IMR-90 (cell line): ENCODE measurements at regions of chr6 and their contacts with region 1.

Region 1: DNA sequence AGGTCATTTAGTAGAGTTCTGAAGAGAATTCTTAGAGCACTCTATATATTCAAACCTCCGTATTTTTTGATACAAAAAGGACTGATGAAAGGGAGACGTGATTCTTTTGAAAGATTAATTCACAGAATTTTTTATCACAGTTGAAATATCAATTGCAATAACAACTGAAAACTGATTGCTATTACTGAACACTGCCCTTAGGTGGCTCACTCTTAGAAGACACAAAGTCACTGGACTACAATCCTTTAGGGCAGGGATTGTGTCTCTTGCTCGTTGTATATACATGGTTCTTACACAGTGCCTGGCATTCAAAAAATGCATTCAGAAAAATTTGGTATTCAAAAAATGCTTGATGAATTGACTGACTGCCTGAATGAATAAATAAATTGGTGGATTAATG is 17.1 kb upstream of the CALHM6 start:
- DNase-seq: peak; percentile 51
- ATAC-seq: peak; percentile 38
- H3K4me3 ChIP-seq: no peak overlapping the region
- H3K27ac ChIP-seq: no peak overlapping the region
- H3K4me1 ChIP-seq: peaks cover 13% of the 10 kb centered on the region
- H3K27me3 ChIP-seq: no peaks in the 10 kb centered on the region
- CTCF ChIP-seq: peak; percentile 55
- POLR2A ChIP-seq: no peak
- RAD21 ChIP-seq: peak; percentile 39

Region 2: GRCh38 chr6:116253505-116254296 is 190.4 kb before region 1 on chr6 and contains the start of gene TSPYL4:
- CTCF ChIA-PET with region 1: no interaction called
- POLR2A ChIA-PET with region 1: no interaction called
- dilution Hi-C with region 1: no loop called
- in situ Hi-C with region 1: no loop called
- intact Hi-C with region 1: loop called (anchors 1 kb)
- DNase-seq: peak; percentile 97
- ATAC-seq: peak; percentile 91
- H3K4me3 ChIP-seq: peak within 1 kb of the TSS; percentile 90
- H3K27ac ChIP-seq: peak within 1 kb of the TSS; percentile 86
- H3K4me1 ChIP-seq: peaks cover 22% of the 10 kb centered on the region
- H3K27me3 ChIP-seq: no peaks in the 10 kb centered on the region
- CTCF ChIP-seq: no peak
- POLR2A ChIP-seq: peak; percentile 88
- RAD21 ChIP-seq: no peak
- total RNA-seq, gene TSPYL4: 22.0 and 23.1 TPM in 2 replicates

Region 3: DNA sequence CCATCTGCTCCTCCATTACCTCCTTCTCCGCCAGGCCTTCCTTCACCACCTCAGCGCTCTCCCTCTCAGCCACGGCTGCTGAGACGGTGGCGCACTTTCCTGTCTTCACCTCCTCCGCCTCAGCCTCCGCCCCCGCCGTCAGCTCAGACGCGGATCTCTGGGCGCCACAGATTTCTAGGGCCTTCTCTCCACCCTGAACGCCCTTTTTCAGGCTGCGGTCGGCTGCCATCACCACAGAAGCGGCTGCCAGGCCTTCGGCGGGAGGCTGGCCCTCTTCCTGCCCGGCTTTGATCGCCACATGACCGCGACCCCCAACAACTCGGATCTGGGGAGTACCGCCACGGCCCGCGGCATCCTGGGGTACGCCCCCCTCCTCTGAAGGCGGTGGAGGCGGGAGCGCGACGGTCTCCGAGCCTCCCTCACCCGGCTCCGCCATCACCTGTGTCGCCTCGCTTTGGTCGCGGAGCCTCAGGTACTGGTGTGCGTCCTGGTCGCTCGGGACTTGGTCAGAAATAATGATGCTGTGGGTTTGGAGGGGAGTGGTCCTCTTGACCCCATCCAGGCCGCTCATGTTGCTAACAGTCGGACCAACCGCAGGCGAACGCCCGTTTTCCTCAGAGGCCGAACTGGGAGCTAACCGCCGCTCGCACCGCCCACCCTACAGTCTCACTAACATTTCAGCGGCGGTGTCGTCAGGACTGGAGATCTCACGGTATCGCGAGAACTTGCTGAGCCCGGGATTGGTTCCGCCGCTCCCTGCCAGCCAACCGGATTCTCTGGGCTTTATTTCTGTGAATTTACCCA is 164.6 kb before region 1 on chr6 and contains the start of gene TSPYL1:
- CTCF ChIA-PET with region 1: no interaction called
- POLR2A ChIA-PET with region 1: no interaction called
- dilution Hi-C with region 1: no loop called
- in situ Hi-C with region 1: loop called (anchors 25 kb)
- intact Hi-C with region 1: no loop called
- DNase-seq: peak; percentile 97
- ATAC-seq: peak; percentile 96
- H3K4me3 ChIP-seq: peak within 1 kb of the TSS; percentile 87
- H3K27ac ChIP-seq: peak within 1 kb of the TSS; percentile 93
- H3K4me1 ChIP-seq: peaks cover 6% of the 10 kb centered on the region
- H3K27me3 ChIP-seq: no peaks in the 10 kb centered on the region
- CTCF ChIP-seq: 0 out of 2 replicates have a peak, but pooled peaks have one; percentile 13
- POLR2A ChIP-seq: peak; percentile 94
- RAD21 ChIP-seq: no peak
- total RNA-seq, gene TSPYL1: 111 and 121 TPM in 2 replicates

Region 4: DNA sequence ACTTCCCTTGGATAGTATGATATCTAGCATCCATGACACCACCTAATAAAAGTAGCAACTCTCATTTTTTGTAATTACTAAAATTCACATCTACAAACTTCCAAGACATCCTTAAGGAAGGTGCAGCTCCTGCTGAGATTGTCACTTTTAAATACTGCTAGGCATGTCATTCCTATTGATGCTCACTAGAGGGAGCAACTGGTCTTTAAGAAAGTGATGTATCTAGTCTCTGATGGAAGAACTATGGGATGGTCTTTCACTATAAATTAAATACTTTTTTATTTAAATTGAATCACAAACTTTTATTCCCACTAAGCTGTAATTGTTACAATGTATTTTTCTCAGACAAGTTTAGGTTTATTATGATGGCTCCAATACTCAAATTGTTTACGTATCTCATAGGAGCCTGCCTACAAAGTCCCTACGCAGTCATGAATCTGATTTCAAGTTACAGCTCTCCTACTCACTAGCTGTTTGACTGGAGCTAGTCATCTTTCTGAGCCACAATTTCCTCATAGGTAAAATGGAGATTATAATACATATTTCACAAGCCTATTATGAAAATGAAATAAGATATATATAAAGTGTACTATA is 156.3 kb before region 1 on chr6:
- CTCF ChIA-PET with region 1: interaction called, 12 read pairs
- POLR2A ChIA-PET with region 1: no interaction called
- dilution Hi-C with region 1: no loop called
- in situ Hi-C with region 1: loop called (anchors 25 kb)
- intact Hi-C with region 1: loop called (anchors 5 kb)
- DNase-seq: peak; percentile 74
- ATAC-seq: peak; percentile 87
- H3K4me3 ChIP-seq: no peak overlapping the region
- H3K27ac ChIP-seq: no peak overlapping the region
- H3K4me1 ChIP-seq: no peaks in the 10 kb centered on the region; the same call in 1 of the 2 replicates
- H3K27me3 ChIP-seq: no peaks in the 10 kb centered on the region
- CTCF ChIP-seq: peak; percentile 88
- POLR2A ChIP-seq: no peak
- RAD21 ChIP-seq: peak; percentile 88

Region 5: GRCh38 chr6:116314878-116315277 is 129.2 kb before region 1 on chr6:
- CTCF ChIA-PET with region 1: no interaction called
- POLR2A ChIA-PET with region 1: no interaction called
- dilution Hi-C with region 1: no loop called
- in situ Hi-C with region 1: no loop called
- intact Hi-C with region 1: no loop called
- DNase-seq: no peak
- ATAC-seq: no peak
- H3K4me3 ChIP-seq: no peak overlapping the region
- H3K27ac ChIP-seq: no peak overlapping the region
- H3K4me1 ChIP-seq: peaks cover 3% of the 10 kb centered on the region; the same call in 1 of the 2 replicates
- H3K27me3 ChIP-seq: no peaks in the 10 kb centered on the region
- CTCF ChIP-seq: no peak
- POLR2A ChIP-seq: no peak
- RAD21 ChIP-seq: no peak

Region 6: DNA sequence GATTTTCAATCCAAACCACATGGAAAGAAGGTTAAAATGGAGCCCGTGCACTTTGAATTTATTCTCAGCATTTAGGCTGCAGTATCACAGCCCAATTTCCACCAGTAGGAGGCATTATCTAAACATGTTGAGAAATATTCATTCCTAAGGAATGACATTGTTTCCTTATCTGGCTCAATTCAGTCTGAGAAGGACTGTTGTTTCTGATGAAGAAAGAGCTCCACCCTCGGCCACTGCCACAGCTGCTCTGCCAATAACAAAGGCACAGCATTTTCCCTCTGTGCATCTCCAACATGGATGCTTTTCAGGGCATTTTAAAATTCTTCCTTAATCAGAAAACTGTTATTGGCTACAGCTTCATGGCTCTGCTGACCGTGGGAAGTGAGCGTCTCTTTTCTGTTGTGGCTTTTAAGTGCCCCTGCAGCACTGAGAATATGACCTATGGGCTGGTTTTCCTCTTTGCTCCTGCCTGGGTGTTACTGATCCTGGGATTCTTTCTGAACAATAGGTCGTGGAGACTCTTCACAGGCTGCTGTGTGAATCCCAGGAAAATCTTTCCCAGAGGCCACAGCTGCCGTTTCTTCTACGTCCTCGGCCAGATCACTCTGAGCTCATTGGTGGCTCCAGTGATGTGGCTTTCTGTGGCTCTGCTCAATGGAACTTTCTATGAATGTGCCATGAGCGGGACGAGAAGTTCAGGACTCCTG is 67.5 kb after region 1 on chr6 and contains the start of gene CALHM5:
- CTCF ChIA-PET with region 1: interaction called, 3 read pairs
- POLR2A ChIA-PET with region 1: no interaction called
- dilution Hi-C with region 1: no loop called
- in situ Hi-C with region 1: no loop called
- intact Hi-C with region 1: loop called (anchors 1 kb)
- DNase-seq: peak; percentile 94
- ATAC-seq: peak; percentile 86
- H3K4me3 ChIP-seq: peak within 1 kb of the TSS; percentile 51
- H3K27ac ChIP-seq: peak within 1 kb of the TSS; percentile 92
- H3K4me1 ChIP-seq: peaks cover 5% of the 10 kb centered on the region
- H3K27me3 ChIP-seq: no peaks in the 10 kb centered on the region
- CTCF ChIP-seq: peak; percentile 85
- POLR2A ChIP-seq: no peak; the same call in 1 of the 2 replicates
- RAD21 ChIP-seq: peak; percentile 50
- total RNA-seq, gene CALHM5: 10.6 and 10.8 TPM in 2 replicates

Region 7: GRCh38 chr6:116550796-116551195 is 106.7 kb after region 1 on chr6:
- CTCF ChIA-PET with region 1: no interaction called
- POLR2A ChIA-PET with region 1: no interaction called
- dilution Hi-C with region 1: no loop called
- in situ Hi-C with region 1: no loop called
- intact Hi-C with region 1: no loop called
- DNase-seq: no peak
- ATAC-seq: no peak
- H3K4me3 ChIP-seq: no peak overlapping the region
- H3K27ac ChIP-seq: no peak overlapping the region
- H3K4me1 ChIP-seq: peaks cover under 1% of the 10 kb centered on the region; the same call in 1 of the 2 replicates
- H3K27me3 ChIP-seq: no peaks in the 10 kb centered on the region
- CTCF ChIP-seq: no peak
- POLR2A ChIP-seq: no peak
- RAD21 ChIP-seq: no peak

Region 8: GRCh38 chr6:116561377-116562018 is 117.4 kb after region 1 on chr6:
- CTCF ChIA-PET with region 1: no interaction called
- POLR2A ChIA-PET with region 1: no interaction called
- dilution Hi-C with region 1: no loop called
- in situ Hi-C with region 1: no loop called
- intact Hi-C with region 1: loop called (anchors 5 kb)
- DNase-seq: peak; percentile 75
- ATAC-seq: peak; percentile 72
- H3K4me3 ChIP-seq: no peak overlapping the region
- H3K27ac ChIP-seq: no peak overlapping the region
- H3K4me1 ChIP-seq: peaks cover 10% of the 10 kb centered on the region
- H3K27me3 ChIP-seq: no peaks in the 10 kb centered on the region
- CTCF ChIP-seq: peak; percentile 89
- POLR2A ChIP-seq: no peak
- RAD21 ChIP-seq: peak; percentile 88